ENCODE measurements at regions of chr20 and their contacts with region 1.

Region 1: DNA sequence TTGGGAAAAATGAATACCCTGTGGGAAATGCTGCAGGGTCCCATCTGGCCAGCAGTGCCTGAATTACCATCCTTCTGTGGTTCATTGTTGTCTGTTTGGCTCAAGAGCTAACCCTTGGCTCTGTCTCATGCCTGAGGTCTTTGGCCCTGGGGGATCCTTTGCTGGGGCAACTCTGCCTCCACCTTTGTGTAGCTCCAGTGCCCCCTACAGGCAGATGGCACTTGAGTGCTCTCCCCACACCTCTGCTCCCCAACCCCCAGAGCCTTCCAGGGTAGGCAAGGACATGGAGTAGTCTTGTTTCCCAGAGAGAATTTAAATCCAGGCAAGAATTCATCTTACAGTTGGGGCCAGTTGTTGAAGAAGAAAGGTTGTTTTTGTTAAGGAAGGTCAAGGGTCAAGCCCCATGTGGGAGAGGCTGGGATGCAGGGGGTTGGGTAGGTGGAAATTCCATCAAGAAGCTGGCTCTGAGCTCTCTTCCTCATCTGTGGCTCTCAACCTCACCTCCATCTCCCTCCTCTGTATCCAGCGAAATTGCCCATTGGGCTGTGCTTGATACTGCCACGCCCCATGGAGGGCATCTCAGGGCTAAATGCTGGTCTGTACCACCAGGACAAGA is 44.2 kb downstream of the ZNF831 start:
- DNase-seq: peak; percentile 86
- ATAC-seq: peak; percentile 96
- H3K4me3 Mint-ChIP-seq: no peak overlapping the region
- H3K27ac Mint-ChIP-seq: peak overlapping the region; percentile 49
- H3K4me1 Mint-ChIP-seq: peaks cover 4% of the 10 kb centered on the region
- H3K27me3 Mint-ChIP-seq: no peaks in the 10 kb centered on the region

Region 2: GRCh38 chr20:59055295-59055694 is 152.6 kb before region 1 on chr20:
- CTCF ChIA-PET with region 1: interaction called, 10 read pairs
- DNase-seq: no peak
- ATAC-seq: no peak
- H3K4me3 Mint-ChIP-seq: no peak overlapping the region
- H3K27ac Mint-ChIP-seq: no peak overlapping the region
- H3K4me1 Mint-ChIP-seq: no peaks in the 10 kb centered on the region
- H3K27me3 Mint-ChIP-seq: peaks cover 51% of the 10 kb centered on the region

Region 3: DNA sequence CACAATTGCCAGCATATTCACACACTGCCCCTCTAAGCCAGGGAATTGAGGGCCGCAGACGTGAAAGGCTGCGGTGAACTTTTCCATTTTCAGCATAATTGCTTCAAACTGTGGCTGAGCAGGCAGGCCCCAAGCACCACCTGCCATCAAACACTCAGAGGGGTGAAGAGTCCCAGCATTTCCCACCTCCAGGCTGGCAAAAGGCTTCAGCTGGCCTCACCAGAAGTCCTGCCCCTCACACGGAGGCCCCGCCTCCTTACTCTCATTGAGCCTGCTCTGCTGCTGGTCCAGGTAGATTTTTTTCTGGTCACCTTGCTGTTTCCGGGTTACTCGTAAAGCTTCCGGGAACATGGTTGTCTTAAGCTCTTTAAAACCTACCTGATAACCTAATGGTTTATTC is 113.3 kb before region 1 on chr20:
- CTCF ChIA-PET with region 1: interaction called, 195 read pairs
- DNase-seq: no peak
- ATAC-seq: no peak
- H3K4me3 Mint-ChIP-seq: no peak overlapping the region
- H3K27ac Mint-ChIP-seq: no peak overlapping the region
- H3K4me1 Mint-ChIP-seq: no peaks in the 10 kb centered on the region
- H3K27me3 Mint-ChIP-seq: peaks cover 8% of the 10 kb centered on the region

Region 4: GRCh38 chr20:59120491-59120890 is 87.4 kb before region 1 on chr20:
- CTCF ChIA-PET with region 1: interaction called, 26 read pairs
- DNase-seq: peak; percentile 62
- ATAC-seq: peak; percentile 18
- H3K4me3 Mint-ChIP-seq: no peak overlapping the region
- H3K27ac Mint-ChIP-seq: peak overlapping the region; percentile 47
- H3K4me1 Mint-ChIP-seq: peaks cover 53% of the 10 kb centered on the region
- H3K27me3 Mint-ChIP-seq: peaks cover 22% of the 10 kb centered on the region

Region 5: GRCh38 chr20:59159493-59160376 is 48.1 kb before region 1 on chr20:
- CTCF ChIA-PET with region 1: interaction called, 10 read pairs
- DNase-seq: peak; percentile 85
- ATAC-seq: peak; percentile 69
- H3K4me3 Mint-ChIP-seq: peak overlapping the region; percentile 78
- H3K27ac Mint-ChIP-seq: peak overlapping the region; percentile 98
- H3K4me1 Mint-ChIP-seq: peaks cover 59% of the 10 kb centered on the region
- H3K27me3 Mint-ChIP-seq: peaks cover 4% of the 10 kb centered on the region

Region 6: GRCh38 chr20:59222253-59223181 is 14.7 kb after region 1 on chr20:
- CTCF ChIA-PET with region 1: interaction called, 30 read pairs
- DNase-seq: peak; percentile 82
- ATAC-seq: peak; percentile 98
- H3K4me3 Mint-ChIP-seq: peak overlapping the region; percentile 62
- H3K27ac Mint-ChIP-seq: no peak overlapping the region
- H3K4me1 Mint-ChIP-seq: peaks cover 7% of the 10 kb centered on the region
- H3K27me3 Mint-ChIP-seq: peaks cover 2% of the 10 kb centered on the region

Region 7: GRCh38 chr20:59412875-59413284 is 205.0 kb after region 1 on chr20:
- CTCF ChIA-PET with region 1: no interaction called
- DNase-seq: no peak
- ATAC-seq: no peak
- H3K4me3 Mint-ChIP-seq: no peak overlapping the region
- H3K27ac Mint-ChIP-seq: no peak overlapping the region
- H3K4me1 Mint-ChIP-seq: no peaks in the 10 kb centered on the region
- H3K27me3 Mint-ChIP-seq: peaks cover 13% of the 10 kb centered on the region

Measured in activated CD8-positive, alpha-beta memory T cell treated with anti-CD3 and anti-CD28 coated beads, Interleukin-2, amount 10 ng/mL, durations not matched to agents 7 days and 5 days (primary cell).